ENCODE measurements at regions of chr2 and their contacts with region 1.

Region 1: DNA sequence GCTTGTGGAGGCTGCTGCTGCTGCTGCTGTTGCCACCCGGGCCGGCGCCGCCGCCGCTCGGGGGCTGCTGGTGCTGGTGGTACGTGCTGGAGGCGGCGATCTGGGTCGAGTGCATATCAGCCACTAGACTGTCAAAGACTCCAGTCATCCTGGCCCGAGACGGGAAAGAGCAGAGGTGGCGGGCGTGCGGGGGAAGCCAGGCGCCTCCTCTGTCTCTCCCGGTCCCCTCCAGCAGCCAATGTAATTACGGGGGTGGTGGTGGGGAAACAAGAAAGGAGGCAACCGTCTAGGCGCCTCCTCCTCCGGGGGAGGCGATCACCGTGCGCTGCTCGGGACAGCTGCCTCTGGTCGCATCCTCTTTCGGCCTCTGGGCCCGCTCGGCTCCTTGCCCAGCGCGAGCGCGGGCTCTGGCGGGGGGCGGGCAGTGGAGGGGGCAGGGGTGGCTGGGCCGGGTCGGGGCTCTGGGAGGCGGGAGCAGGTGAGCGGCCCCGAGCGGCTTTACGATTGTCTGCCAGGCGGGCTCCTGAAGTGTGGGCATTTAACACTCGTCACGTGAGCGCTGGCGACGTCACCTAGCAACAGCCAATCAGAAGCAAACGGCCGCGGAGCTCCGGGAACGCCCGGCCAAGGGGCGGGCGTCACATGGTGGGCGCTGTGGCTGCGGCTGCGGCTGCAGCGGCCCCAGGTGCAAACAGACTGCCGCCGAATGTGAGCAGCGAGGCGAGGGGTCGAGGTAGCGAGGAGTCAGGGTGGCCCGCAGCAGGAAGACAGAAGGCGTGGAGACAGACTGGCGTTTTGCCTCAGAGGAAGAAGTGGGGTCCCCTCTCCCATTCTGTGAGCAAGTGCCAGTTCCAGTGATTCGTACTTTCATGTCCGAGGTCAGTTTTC is at the start of gene DLX2:
- DNase-seq: peak; percentile 94
- H3K4me3 ChIP-seq: peak within 1 kb of the TSS; percentile 51 to 64
- H3K27ac ChIP-seq: no peak within 1 kb of the TSS
- H3K4me1 ChIP-seq: peaks cover 10 to 31% of the 10 kb centered on the region in 2 experiments
- H3K27me3 ChIP-seq: peaks cover 22% of the 10 kb centered on the region; the same call in 1 of the 2 replicates
- CTCF ChIP-seq: no peak
- EP300 ChIP-seq: no peak
- RAD21 ChIP-seq: no peak
- polyA plus RNA-seq, gene DLX2: 0.02 TPM in 2 replicates

Region 2: DNA sequence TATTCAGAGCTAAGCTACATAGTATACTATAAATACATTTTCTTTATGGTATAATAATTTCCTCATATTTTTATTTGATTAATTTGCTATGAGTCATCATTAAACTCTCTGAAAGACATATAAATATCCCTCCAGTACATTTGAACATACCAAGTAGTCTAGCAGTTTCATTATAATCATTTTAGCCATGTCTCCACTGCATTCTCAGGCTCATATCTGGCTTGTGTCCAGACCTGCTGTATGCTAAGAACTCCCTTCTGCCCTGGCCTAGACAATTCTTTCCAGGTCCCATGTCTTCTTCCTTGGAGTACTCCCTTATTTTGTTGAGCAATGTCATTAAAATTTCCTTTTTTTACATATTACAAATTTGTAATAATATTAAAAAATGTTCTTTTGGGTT is 432.0 kb before region 1 on chr2:
- CTCF ChIA-PET with region 1: no interaction called
- POLR2A ChIA-PET with region 1: no interaction called
- DNase-seq: no peak
- H3K4me3 ChIP-seq: no peak overlapping the region
- H3K27ac ChIP-seq: no peak overlapping the region
- H3K4me1 ChIP-seq: no peaks in the 10 kb centered on the region; a peak in 1 of 4 replicates
- H3K27me3 ChIP-seq: no peaks in the 10 kb centered on the region
- CTCF ChIP-seq: no peak
- EP300 ChIP-seq: no peak
- RAD21 ChIP-seq: no peak

Region 3: DNA sequence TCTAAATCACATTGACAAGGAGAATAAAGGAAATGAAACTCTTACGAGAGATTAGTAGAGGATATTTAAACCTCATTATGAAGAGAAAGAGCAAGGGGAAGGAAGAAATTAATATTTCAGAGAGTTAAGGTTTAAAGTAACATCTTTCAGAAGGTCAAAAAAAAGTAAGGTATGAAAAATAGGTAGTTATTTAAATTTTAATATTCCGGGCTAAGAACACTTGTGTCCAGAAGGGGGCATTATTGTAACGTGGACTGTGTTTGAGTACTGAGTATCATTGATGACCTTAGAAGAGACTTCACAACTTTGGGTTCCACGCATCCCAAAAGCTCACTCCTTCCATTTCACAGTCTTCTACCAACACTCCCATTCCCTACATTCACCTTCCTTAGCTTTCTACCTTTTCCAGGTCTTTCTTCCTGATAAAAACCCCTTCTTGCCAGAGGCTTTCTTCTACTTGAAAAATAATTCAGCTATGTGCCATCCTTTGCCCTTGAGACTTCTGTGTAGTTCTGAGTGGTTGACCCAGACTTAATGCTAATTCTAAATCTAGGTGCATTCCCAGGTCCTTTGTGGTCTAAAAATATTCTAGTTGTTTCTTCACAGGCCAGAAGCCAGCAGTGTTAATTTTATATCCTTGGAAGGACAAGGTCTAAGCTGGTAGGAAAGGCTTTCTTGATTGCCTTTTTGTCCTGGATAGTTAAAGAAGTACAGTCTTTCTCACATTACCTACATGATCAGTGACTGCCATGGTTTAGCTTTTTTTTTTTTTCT is 398.9 kb before region 1 on chr2:
- CTCF ChIA-PET with region 1: interaction called, 96 read pairs
- POLR2A ChIA-PET with region 1: no interaction called
- DNase-seq: peak; percentile 40
- H3K4me3 ChIP-seq: no peak overlapping the region; a peak in 1 of 4 replicates
- H3K27ac ChIP-seq: peak overlapping the region in 1 of 2 experiments; percentile 23; a peak in 1 of 4 replicates
- H3K4me1 ChIP-seq: peaks cover 0 to 43% of the 10 kb centered on the region in 2 experiments; a peak in 3 of 4 replicates
- H3K27me3 ChIP-seq: no peaks in the 10 kb centered on the region
- CTCF ChIP-seq: peak; percentile 65
- EP300 ChIP-seq: no peak
- RAD21 ChIP-seq: peak; percentile 63

Region 4: GRCh38 chr2:171811245-171811628 is 291.4 kb before region 1 on chr2:
- CTCF ChIA-PET with region 1: interaction called, 59 read pairs
- POLR2A ChIA-PET with region 1: no interaction called
- DNase-seq: peak; percentile 34
- H3K4me3 ChIP-seq: no peak overlapping the region
- H3K27ac ChIP-seq: no peak overlapping the region
- H3K4me1 ChIP-seq: no peaks in the 10 kb centered on the region
- H3K27me3 ChIP-seq: no peaks in the 10 kb centered on the region
- CTCF ChIP-seq: peak; percentile 57
- EP300 ChIP-seq: no peak
- RAD21 ChIP-seq: peak; percentile 80

Region 5: GRCh38 chr2:172084734-172085459 is 17.7 kb before region 1 on chr2:
- CTCF ChIA-PET with region 1: interaction called, 14 read pairs
- POLR2A ChIA-PET with region 1: no interaction called
- DNase-seq: peak; percentile 93
- H3K4me3 ChIP-seq: peak overlapping the region; percentile 48 to 65
- H3K27ac ChIP-seq: no peak overlapping the region
- H3K4me1 ChIP-seq: peaks cover 0 to 18% of the 10 kb centered on the region in 2 experiments; a peak in 1 of 4 replicates
- H3K27me3 ChIP-seq: peaks cover 75% of the 10 kb centered on the region
- CTCF ChIP-seq: no peak
- EP300 ChIP-seq: no peak
- RAD21 ChIP-seq: no peak

Region 6: GRCh38 chr2:172113617-172114016 is 11.0 kb after region 1 on chr2:
- CTCF ChIA-PET with region 1: interaction called, 14 read pairs
- POLR2A ChIA-PET with region 1: no interaction called
- DNase-seq: peak; percentile 49
- H3K4me3 ChIP-seq: no peak overlapping the region
- H3K27ac ChIP-seq: no peak overlapping the region
- H3K4me1 ChIP-seq: peaks cover 0 to 1% of the 10 kb centered on the region in 2 experiments; a peak in 1 of 4 replicates
- H3K27me3 ChIP-seq: no peaks in the 10 kb centered on the region
- CTCF ChIP-seq: peak; percentile 58
- EP300 ChIP-seq: no peak
- RAD21 ChIP-seq: peak; percentile 69

Region 7: GRCh38 chr2:172120118-172120517 is 17.5 kb after region 1 on chr2:
- CTCF ChIA-PET with region 1: interaction called, 14 read pairs
- POLR2A ChIA-PET with region 1: no interaction called
- DNase-seq: no peak
- H3K4me3 ChIP-seq: no peak overlapping the region
- H3K27ac ChIP-seq: no peak overlapping the region
- H3K4me1 ChIP-seq: peaks cover 0 to 4% of the 10 kb centered on the region in 2 experiments; a peak in 1 of 4 replicates
- H3K27me3 ChIP-seq: no peaks in the 10 kb centered on the region
- CTCF ChIP-seq: no peak
- EP300 ChIP-seq: no peak
- RAD21 ChIP-seq: no peak

Region 8: GRCh38 chr2:172131713-172132555 is 29.3 kb after region 1 on chr2:
- CTCF ChIA-PET with region 1: interaction called, 19 read pairs
- POLR2A ChIA-PET with region 1: no interaction called
- DNase-seq: no peak
- H3K4me3 ChIP-seq: no peak overlapping the region
- H3K27ac ChIP-seq: no peak overlapping the region
- H3K4me1 ChIP-seq: no peaks in the 10 kb centered on the region
- H3K27me3 ChIP-seq: no peaks in the 10 kb centered on the region
- CTCF ChIP-seq: no peak
- EP300 ChIP-seq: no peak
- RAD21 ChIP-seq: no peak

Region 9: DNA sequence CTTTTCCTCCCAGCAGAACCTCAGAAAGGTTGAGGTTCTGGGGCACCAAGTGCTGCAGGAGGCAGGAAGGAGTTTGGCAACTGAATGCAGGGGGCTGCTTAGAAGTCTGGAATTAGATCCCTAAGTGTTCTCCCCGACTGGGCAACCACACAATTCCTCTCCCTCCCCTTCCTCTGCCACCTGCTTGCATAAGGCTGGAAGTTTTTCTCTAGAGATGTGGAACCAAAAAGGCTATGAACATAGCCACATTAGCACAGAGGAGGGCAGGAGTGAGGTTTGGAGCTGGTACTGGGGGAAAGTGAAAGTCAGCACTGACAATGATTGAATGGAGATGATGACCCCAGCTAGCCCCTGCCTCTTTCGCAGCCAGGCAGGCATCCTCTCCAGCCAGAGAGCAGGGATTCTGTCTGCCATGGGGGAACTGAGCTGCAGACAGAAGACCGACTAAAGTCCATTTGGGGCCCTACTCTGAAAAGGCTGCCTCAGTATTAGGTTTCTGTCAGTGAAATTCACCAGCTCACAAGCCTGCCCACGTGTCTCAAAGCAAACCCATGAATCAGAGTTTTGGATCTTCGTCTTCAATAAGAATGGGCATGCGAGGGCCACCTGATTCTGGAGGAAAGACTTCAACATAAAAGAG is 236.9 kb after region 1 on chr2:
- CTCF ChIA-PET with region 1: no interaction called
- POLR2A ChIA-PET with region 1: no interaction called
- DNase-seq: no peak
- H3K4me3 ChIP-seq: peak overlapping the region in 1 of 2 experiments; percentile 28; a peak in 2 of 4 replicates
- H3K27ac ChIP-seq: no peak overlapping the region
- H3K4me1 ChIP-seq: peaks cover 0 to 8% of the 10 kb centered on the region in 2 experiments; a peak in 1 of 4 replicates
- H3K27me3 ChIP-seq: no peaks in the 10 kb centered on the region
- CTCF ChIP-seq: no peak
- EP300 ChIP-seq: no peak
- RAD21 ChIP-seq: no peak

Measured in SK-N-SH (cell line).